GM23248 (cell line): ENCODE measurements at regions of chr22 and their contacts with region 1.

Region 1: GRCh38 chr22:34111210-34111824 is 191.0 kb upstream of the LARGE1 start:
- DNase-seq: peak; percentile 59
- H3K4me3 ChIP-seq: no peak overlapping the region
- H3K27ac ChIP-seq: no peak overlapping the region
- H3K4me1 ChIP-seq: no peaks in the 10 kb centered on the region
- H3K27me3 ChIP-seq: no peaks in the 10 kb centered on the region

Region 2: DNA sequence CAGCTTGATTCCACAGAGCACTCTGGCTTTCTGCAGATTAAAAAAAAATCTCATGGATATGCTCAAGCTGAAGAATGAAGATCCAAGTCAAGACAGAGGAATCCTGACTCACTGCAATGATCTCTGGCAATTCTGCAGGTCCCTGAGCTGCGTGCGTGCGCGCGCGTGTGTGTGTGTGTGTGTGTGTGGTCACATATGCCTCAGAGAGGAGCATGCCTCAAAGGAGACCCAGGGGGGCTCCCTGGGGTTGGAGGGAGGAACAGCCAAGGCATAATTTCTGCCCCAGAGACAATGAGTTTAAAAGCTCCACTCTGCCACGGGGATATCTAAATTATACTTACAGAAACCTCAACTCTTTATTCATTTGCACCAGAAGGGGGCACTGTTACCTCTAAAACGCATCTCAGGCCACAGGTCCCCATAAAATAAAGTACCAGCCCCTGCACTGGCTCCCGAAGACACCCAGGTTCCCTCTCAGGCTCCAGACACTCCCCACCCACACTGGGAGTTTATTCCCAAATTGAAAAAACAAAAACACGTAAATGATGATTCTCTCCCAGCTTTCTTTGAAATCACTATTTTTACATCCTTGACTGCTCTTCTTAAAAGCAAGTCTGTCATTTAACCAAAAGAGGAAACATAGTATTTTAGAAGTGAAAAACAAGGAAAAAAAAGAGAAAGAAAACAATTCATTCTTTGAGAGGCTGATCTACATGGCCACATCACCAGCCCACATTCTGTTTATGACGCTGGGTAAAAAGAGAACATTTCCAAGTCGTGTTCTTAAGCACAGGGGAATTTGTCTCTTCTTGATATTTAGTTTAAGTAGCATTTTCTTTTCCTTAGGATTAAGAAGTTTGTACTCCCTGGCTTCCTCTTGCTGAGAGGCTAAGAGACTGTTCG is 592.0 kb before region 1 on chr22:
- in situ Hi-C with region 1: loop called (anchors 25 kb)
- DNase-seq: peak; percentile 84
- H3K4me3 ChIP-seq: peak overlapping the region; percentile 74
- H3K27ac ChIP-seq: no peak overlapping the region
- H3K4me1 ChIP-seq: 0 out of 2 replicates have a peak, but pooled peaks cover 4% of the 10 kb centered on the region
- H3K27me3 ChIP-seq: no peaks in the 10 kb centered on the region